ENCODE measurements at regions of chr5 and their contacts with region 1.

Region 1: DNA sequence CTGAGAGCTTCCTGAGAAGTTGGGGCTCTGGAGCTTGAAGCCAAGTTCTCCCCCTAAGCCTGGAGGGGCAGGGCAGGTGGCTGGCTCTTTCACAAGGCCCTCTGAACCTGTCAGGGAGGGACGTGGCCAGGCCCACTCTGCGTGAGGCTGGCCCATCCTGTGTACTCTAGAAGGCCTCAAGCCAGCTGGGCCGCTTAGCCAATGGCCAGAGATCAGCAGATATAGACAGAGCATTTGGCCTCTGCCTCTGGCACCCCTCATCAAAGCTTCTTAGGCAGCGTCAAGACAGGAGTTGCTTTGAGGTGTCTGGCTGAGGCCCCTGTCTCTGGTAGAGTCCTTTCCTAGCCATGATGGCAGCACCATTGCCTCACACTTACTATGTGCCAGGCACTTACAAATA is 105.6 kb downstream of the FGF18 start:
- DNase-seq: no peak
- H3K4me3 ChIP-seq: no peak overlapping the region
- CTCF ChIP-seq: no peak

Region 2: DNA sequence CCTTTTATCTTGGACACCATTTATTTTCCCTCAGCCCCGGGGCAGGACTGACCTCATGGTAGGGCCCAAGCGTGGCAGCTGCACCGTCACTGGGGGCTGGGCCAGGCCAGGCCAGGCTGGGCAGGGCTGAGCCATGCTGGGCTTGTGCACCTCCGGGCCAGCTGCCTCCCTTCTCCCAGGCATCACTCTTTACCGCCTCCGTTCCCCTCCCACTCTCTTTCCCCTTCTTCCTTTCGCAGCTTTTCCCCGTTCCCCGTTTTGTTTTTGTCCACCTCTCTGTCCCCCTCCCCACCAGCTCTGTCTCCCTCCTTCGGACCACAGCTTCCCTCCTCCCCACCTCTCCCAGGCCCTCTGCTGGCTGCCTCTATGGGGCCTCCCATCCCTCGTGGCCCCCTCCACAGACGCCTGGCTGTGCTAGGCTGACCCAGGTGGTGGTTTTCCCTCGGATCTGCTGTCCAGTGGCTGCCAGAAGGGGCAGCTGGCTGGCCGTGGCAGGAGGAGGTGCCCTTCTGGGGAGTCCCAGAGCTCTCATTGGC is 87.7 kb before region 1 on chr5:
- in situ Hi-C with region 1: loop called (anchors 5 kb)
- DNase-seq: no peak
- H3K4me3 ChIP-seq: no peak overlapping the region
- CTCF ChIP-seq: no peak